ENCODE measurements at regions of chr5 and their contacts with region 1.

Region 1: DNA sequence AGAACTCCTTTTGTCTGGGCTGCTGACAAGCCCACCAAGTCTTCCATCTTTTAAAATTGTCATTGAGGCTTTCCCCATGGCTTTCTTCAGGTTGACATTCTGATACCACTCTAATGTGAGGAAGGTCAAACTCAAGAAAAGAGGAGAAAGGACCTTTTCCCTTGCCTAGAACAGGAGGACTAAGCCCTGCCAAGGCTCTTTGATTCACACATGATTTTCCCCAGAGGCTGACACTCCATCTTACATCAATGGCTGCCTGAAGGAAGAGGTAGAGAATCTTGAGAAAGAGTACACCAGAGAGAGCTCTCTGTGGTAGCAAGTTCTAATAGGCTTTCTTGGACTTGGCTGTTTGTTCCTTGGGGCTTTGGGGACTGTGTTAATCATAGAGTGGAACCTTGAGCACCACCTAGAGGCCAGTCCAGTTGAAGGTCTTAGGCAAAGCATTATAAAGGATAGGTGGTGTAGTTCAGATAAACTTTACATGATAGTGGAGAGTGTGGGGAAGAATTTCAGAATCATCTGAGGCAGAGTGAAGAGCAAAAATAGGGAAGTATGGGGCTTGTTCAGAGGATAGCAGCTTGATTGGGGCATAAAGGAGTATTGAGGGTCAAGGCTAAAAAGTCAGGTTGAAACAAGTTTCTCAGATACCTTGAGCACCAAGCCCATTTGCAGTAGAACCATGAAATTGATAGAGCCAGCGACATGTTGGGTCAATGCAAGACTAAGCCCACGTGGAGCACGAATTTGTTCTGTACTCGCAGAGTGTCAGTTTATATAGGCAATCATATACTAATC is 36.7 kb downstream of the NDFIP1 start:
- DNase-seq: no peak
- H3K4me3 ChIP-seq: no peak overlapping the region
- H3K27ac ChIP-seq: no peak overlapping the region
- H3K4me1 ChIP-seq: peaks cover 0 to 10% (median 0%) of the 10 kb centered on the region in 6 donors
- H3K27me3 ChIP-seq: no peaks in the 10 kb centered on the region
- CTCF ChIP-seq: peak in 10 of 11 experiments; percentile 29 to 74 (median 58)
- POLR2A ChIP-seq: no peak

Region 2: GRCh38 chr5:141618804-141619554 is 526.3 kb before region 1 on chr5 and contains the start of gene DIAPH1:
- intact Hi-C with region 1: no loop called
- DNase-seq: peak; percentile 100
- H3K4me3 ChIP-seq: peak within 1 kb of the TSS; percentile 76 to 96 (median 92)
- H3K27ac ChIP-seq: peak within 1 kb of the TSS; percentile 77 to 100 (median 96)
- H3K4me1 ChIP-seq: peaks cover 17 to 75% (median 63%) of the 10 kb centered on the region in 6 donors
- H3K27me3 ChIP-seq: no peaks in the 10 kb centered on the region
- CTCF ChIP-seq: peak; percentile 96 to 100 (median 99)
- POLR2A ChIP-seq: peak in 2 of 3 donors; percentile 40 to 80
- total RNA-seq, gene DIAPH1: 72.5 to 123 (median 93.0) TPM

Region 3: GRCh38 chr5:142000703-142001484 is 144.4 kb before region 1 on chr5:
- intact Hi-C with region 1: loop called (anchors 5 kb)
- DNase-seq: no peak
- H3K4me3 ChIP-seq: no peak overlapping the region
- H3K27ac ChIP-seq: peak overlapping the region in 2 of 8 donors; percentile 4 to 55
- H3K4me1 ChIP-seq: peaks cover 0 to 18% (median 0%) of the 10 kb centered on the region in 6 donors
- H3K27me3 ChIP-seq: no peaks in the 10 kb centered on the region
- CTCF ChIP-seq: peak in 3 of 11 experiments; percentile 12 to 31 (median 21)
- POLR2A ChIP-seq: no peak

Region 4: GRCh38 chr5:142246258-142246657 is 101.0 kb after region 1 on chr5:
- intact Hi-C with region 1: no loop called
- DNase-seq: no peak
- H3K4me3 ChIP-seq: no peak overlapping the region
- H3K27ac ChIP-seq: peak overlapping the region in 2 of 8 donors; percentile 15 to 33
- H3K4me1 ChIP-seq: no peaks in the 10 kb centered on the region
- H3K27me3 ChIP-seq: no peaks in the 10 kb centered on the region
- CTCF ChIP-seq: no peak
- POLR2A ChIP-seq: no peak

Region 5: GRCh38 chr5:143041972-143042770 is 896.9 kb after region 1 on chr5:
- intact Hi-C with region 1: no loop called
- DNase-seq: no peak
- H3K4me3 ChIP-seq: no peak overlapping the region
- H3K27ac ChIP-seq: no peak overlapping the region
- H3K4me1 ChIP-seq: peaks cover 0 to 7% (median 0%) of the 10 kb centered on the region in 6 donors
- H3K27me3 ChIP-seq: no peaks in the 10 kb centered on the region
- CTCF ChIP-seq: no peak
- POLR2A ChIP-seq: no peak

Measured in spleen (tissue), 13 donors.